GM13977 (cell line): ENCODE measurements at regions of chr12 and their contacts with region 1.

Region 1: GRCh38 chr12:113912760-113913329 is 53.3 kb downstream of the RBM19 start:
- DNase-seq: peak; percentile 74
- CTCF ChIP-seq: peak; percentile 90

Region 2: GRCh38 chr12:113299619-113300237 is 613.1 kb before region 1 on chr12:
- in situ Hi-C with region 1: loop called (anchors 25 kb)
- DNase-seq: no peak
- CTCF ChIP-seq: no peak